PC-9 (cell line): ENCODE measurements at regions of chr13 and their contacts with region 1.

Region 1: GRCh38 chr13:107205303-107206104 is 637.6 kb upstream of the ARGLU1 start:
- DNase-seq: peak; percentile 39 to 58
- H3K4me3 ChIP-seq: no peak overlapping the region
- H3K27ac ChIP-seq: no peak overlapping the region
- H3K4me1 ChIP-seq: no peaks in the 10 kb centered on the region
- H3K27me3 ChIP-seq: no peaks in the 10 kb centered on the region
- CTCF ChIP-seq: peak; percentile 99

Region 2: GRCh38 chr13:106981051-106981450 is 224.5 kb before region 1 on chr13:
- CTCF ChIA-PET with region 1: no interaction called
- POLR2A ChIA-PET with region 1: no interaction called
- intact Hi-C with region 1: no loop called
- DNase-seq: no peak
- H3K4me3 ChIP-seq: no peak overlapping the region
- H3K27ac ChIP-seq: no peak overlapping the region
- H3K4me1 ChIP-seq: no peaks in the 10 kb centered on the region
- H3K27me3 ChIP-seq: no peaks in the 10 kb centered on the region
- CTCF ChIP-seq: no peak

Region 3: DNA sequence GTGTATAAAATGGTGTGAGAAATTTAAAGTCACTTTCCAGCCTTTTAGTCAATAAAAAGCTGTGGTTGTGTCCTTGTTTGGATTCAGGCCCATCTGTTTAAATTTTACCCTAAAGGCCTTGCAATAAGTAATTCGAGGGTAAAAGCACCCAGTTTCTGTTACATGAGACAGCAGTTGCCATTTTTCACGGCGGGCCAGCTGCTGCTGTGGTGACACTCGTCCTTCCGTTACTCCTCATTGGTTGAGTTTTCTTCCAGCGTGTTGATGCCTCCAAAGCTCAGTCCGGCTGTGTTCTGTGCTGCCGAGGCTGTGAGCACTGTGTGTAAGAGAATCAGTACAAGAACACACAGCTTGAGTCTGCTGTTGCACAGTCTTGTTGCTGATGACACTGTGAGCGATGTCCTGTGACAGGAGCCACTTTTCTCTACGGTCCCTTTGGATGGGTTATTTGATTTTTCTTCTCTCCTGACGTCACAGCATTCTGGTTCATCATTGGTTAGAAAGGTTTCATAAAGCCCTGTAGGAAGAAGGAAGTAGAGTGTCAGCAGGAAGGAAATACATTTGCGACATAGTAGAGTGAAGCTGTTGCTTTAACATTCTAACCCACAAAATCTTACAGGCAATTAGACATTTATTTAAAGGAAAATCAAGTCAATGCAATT is 35.1 kb before region 1 on chr13:
- CTCF ChIA-PET with region 1: no interaction called
- POLR2A ChIA-PET with region 1: no interaction called
- intact Hi-C with region 1: no loop called
- DNase-seq: no peak
- H3K4me3 ChIP-seq: no peak overlapping the region
- H3K27ac ChIP-seq: no peak overlapping the region
- H3K4me1 ChIP-seq: no peaks in the 10 kb centered on the region
- H3K27me3 ChIP-seq: no peaks in the 10 kb centered on the region
- CTCF ChIP-seq: no peak

Region 4: GRCh38 chr13:108093616-108094015 is 888.1 kb after region 1 on chr13:
- CTCF ChIA-PET with region 1: no interaction called
- POLR2A ChIA-PET with region 1: no interaction called
- intact Hi-C with region 1: loop called (anchors 5 kb)
- DNase-seq: no peak
- H3K4me3 ChIP-seq: no peak overlapping the region
- H3K27ac ChIP-seq: no peak overlapping the region
- H3K4me1 ChIP-seq: no peaks in the 10 kb centered on the region
- H3K27me3 ChIP-seq: no peaks in the 10 kb centered on the region
- CTCF ChIP-seq: no peak

Region 5: DNA sequence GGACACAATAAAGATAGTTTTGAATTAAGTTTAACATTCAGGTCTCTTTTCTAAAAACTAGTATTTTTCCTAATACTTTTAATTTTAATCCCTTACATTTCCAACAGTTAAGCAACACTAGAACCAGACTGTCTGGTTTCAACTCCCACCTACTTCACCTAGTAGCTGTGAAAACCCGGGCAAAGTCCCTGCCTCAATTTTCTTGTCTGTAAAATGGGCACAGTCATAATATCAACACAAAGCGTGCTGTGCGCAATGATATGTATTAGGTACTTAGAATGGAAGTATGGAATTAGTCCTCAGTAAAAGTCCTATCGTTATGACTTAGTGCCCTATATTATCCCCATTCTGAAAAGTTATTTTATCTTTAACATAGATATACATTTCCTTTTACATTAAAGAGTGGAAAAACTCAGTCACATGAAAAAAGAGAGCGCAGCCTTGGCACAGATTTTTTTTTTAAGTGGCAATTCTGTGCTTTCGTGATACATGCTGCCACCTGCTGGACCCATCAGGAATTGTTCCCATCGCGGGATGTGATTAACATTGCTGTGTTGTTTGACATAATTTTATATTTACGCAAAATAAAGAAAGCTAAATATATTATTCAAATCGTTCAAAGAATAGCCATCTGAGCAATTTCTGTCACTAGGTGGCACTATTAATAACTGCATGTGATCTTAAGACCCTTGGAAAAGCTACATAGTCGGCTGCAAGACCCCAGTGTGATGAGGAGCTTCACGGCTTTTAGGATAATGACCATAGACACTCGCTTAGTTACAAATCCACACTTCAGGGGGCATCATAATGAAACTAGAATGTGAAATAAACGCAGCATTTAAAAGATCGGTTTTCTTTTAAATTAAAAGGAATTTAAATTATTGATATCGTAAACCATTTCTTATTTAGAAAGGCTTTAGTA is 949.9 kb after region 1 on chr13:
- CTCF ChIA-PET with region 1: no interaction called
- POLR2A ChIA-PET with region 1: no interaction called
- intact Hi-C with region 1: loop called (anchors 1 kb)
- DNase-seq: peak; percentile 42 to 48
- H3K4me3 ChIP-seq: no peak overlapping the region
- H3K27ac ChIP-seq: no peak overlapping the region
- H3K4me1 ChIP-seq: no peaks in the 10 kb centered on the region
- H3K27me3 ChIP-seq: no peaks in the 10 kb centered on the region
- CTCF ChIP-seq: peak; percentile 97